MCF 10A (cell line): ENCODE measurements at regions of chr1 and their contacts with region 1.

Region 1: DNA sequence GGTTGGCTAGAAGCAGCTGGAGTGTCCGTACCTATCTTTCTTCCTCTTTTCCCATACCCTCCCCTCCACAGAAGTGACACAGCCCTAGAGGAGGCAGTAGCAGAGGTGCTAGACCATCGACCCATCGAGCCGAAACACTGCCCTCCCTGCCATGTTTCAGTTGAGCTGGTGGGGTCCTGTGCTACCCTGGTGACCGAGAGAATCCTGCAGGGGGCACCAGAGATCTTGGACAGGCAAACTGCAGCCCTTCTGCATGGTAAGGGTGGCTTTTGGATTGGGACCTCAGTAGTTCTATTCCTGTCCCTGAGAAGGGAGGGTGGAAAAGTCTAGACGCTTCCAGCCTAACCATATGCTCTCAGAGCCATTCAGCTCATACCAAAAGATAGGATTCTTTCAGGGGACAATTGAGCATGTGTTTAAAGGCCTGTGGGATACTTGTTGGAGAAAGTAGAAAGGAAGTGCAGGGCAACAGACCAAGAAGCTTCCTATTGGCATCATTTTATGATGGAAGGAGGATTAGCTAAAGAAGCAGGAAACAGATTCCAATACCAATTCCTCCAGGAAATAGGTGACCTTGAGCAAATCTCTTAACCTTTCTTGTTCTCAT is 11.7 kb upstream of the BNIPL start:
- DNase-seq: peak; percentile 75
- H3K4me3 Mint-ChIP-seq: no peak overlapping the region
- H3K27ac Mint-ChIP-seq: no peak overlapping the region
- H3K4me1 Mint-ChIP-seq: no peaks in the 10 kb centered on the region
- H3K27me3 Mint-ChIP-seq: no peaks in the 10 kb centered on the region
- CTCF ChIP-seq: peak; percentile 83

Region 2: DNA sequence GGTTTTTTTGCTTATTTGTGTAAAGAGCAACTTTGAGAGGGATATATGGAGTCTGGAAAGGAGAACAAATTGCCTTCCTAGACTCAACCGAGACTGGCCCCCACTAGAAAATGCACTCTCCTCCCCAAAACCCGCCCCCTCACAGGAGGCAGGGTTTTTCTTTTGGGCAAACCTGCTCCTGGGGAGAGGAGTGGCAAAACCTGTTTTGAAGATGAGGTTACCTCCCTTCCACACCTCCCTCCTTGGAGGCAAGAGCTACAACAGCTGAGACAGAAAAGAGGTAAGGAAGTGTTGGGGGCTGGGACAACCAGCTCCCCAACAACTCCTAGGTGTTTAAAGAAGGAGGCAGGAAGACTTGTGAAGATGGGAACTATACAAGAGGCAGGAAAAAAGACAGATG is 11.7 kb after region 1 on chr1 and contains the start of gene BNIPL:
- CTCF ChIA-PET with region 1: interaction called, 29 read pairs
- POLR2A ChIA-PET with region 1: interaction called, 4 read pairs
- intact Hi-C with region 1: no loop called
- DNase-seq: no peak
- H3K4me3 Mint-ChIP-seq: no peak within 1 kb of the TSS
- H3K27ac Mint-ChIP-seq: no peak within 1 kb of the TSS
- H3K4me1 Mint-ChIP-seq: peaks cover 5% of the 10 kb centered on the region
- H3K27me3 Mint-ChIP-seq: no peaks in the 10 kb centered on the region
- CTCF ChIP-seq: no peak
- total RNA-seq, gene BNIPL: 1.2 and 2.3 TPM in 2 replicates

Region 3: GRCh38 chr1:151047925-151048645 is 23.4 kb after region 1 on chr1:
- CTCF ChIA-PET with region 1: interaction called, 22 read pairs
- POLR2A ChIA-PET with region 1: interaction called, 3 read pairs
- intact Hi-C with region 1: no loop called
- DNase-seq: peak; percentile 79
- H3K4me3 Mint-ChIP-seq: peak overlapping the region; percentile 85
- H3K27ac Mint-ChIP-seq: peak overlapping the region; percentile 79
- H3K4me1 Mint-ChIP-seq: peaks cover 21% of the 10 kb centered on the region
- H3K27me3 Mint-ChIP-seq: no peaks in the 10 kb centered on the region
- CTCF ChIP-seq: peak; percentile 36

Region 4: GRCh38 chr1:151059078-151059907 is 34.6 kb after region 1 on chr1 and contains the start of gene CDC42SE1:
- CTCF ChIA-PET with region 1: interaction called, 11 read pairs
- POLR2A ChIA-PET with region 1: interaction called, 5 read pairs
- intact Hi-C with region 1: loop called (anchors 1 kb)
- DNase-seq: peak; percentile 85
- H3K4me3 Mint-ChIP-seq: peak within 1 kb of the TSS; percentile 82
- H3K27ac Mint-ChIP-seq: peak within 1 kb of the TSS; percentile 92
- H3K4me1 Mint-ChIP-seq: peaks cover 61% of the 10 kb centered on the region
- H3K27me3 Mint-ChIP-seq: no peaks in the 10 kb centered on the region
- CTCF ChIP-seq: peak; percentile 91
- total RNA-seq, gene CDC42SE1: 134 and 139 TPM in 2 replicates

Region 5: GRCh38 chr1:151070474-151071276 is 46.0 kb after region 1 on chr1 and contains the start of gene GABPB2:
- CTCF ChIA-PET with region 1: interaction called, 4 read pairs
- POLR2A ChIA-PET with region 1: interaction called, 6 read pairs
- intact Hi-C with region 1: loop called (anchors 2 kb)
- DNase-seq: peak; percentile 98
- H3K4me3 Mint-ChIP-seq: peak within 1 kb of the TSS; percentile 100
- H3K27ac Mint-ChIP-seq: peak within 1 kb of the TSS; percentile 100
- H3K4me1 Mint-ChIP-seq: no peaks in the 10 kb centered on the region
- H3K27me3 Mint-ChIP-seq: no peaks in the 10 kb centered on the region
- CTCF ChIP-seq: peak; percentile 99
- total RNA-seq, gene GABPB2: 20.2 and 22.9 TPM in 2 replicates

Region 6: DNA sequence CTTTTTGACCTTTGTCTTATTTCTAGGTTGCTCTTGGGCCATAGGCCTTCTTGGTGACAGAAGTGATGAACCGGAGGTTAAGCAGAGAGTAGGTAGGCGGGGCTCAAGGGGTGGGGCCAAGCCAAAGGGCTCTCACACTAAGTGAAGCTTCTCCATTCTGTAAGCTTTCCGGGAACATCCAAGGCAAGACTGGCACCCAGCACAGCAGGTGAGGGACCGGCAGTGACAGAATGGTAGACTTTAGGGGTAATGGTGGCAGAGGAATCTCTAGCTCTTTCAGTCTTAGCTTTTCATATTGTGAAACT is 131.8 kb after region 1 on chr1 and contains the start of gene TNFAIP8L2:
- CTCF ChIA-PET with region 1: interaction called, 29 read pairs
- POLR2A ChIA-PET with region 1: no interaction called
- intact Hi-C with region 1: loop called (anchors 1 kb)
- DNase-seq: no peak
- H3K4me3 Mint-ChIP-seq: no peak within 1 kb of the TSS
- H3K27ac Mint-ChIP-seq: no peak within 1 kb of the TSS
- H3K4me1 Mint-ChIP-seq: peaks cover 12% of the 10 kb centered on the region
- H3K27me3 Mint-ChIP-seq: no peaks in the 10 kb centered on the region
- CTCF ChIP-seq: no peak
- total RNA-seq, gene TNFAIP8L2: not detected in 2 replicates

Region 7: GRCh38 chr1:151165738-151166505 is 141.3 kb after region 1 on chr1 and contains the starts of genes LYSMD1 and SCNM1:
- CTCF ChIA-PET with region 1: interaction called, 11 read pairs
- POLR2A ChIA-PET with region 1: no interaction called
- intact Hi-C with region 1: no loop called
- DNase-seq: peak; percentile 100
- H3K4me3 Mint-ChIP-seq: peak within 1 kb of the TSS; percentile 87
- H3K27ac Mint-ChIP-seq: peak within 1 kb of the TSS; percentile 97
- H3K4me1 Mint-ChIP-seq: peaks cover 25% of the 10 kb centered on the region
- H3K27me3 Mint-ChIP-seq: no peaks in the 10 kb centered on the region
- CTCF ChIP-seq: no peak
- total RNA-seq, gene LYSMD1: 14.4 and 22.3 TPM in 2 replicates
- total RNA-seq, gene SCNM1: 88.5 and 93.0 TPM in 2 replicates